PC-3 (cell line): ENCODE measurements at regions of chr12 and their contacts with region 1.

Region 1: GRCh38 chr12:115155665-115156645 is 472.0 kb upstream of the TBX3 start:
- DNase-seq: peak; percentile 99
- ATAC-seq: peak; percentile 91
- H3K4me3 ChIP-seq: no peak overlapping the region
- H3K27ac ChIP-seq: peak overlapping the region; percentile 96
- H3K4me1 ChIP-seq: peaks cover 21% of the 10 kb centered on the region
- H3K27me3 ChIP-seq: no peaks in the 10 kb centered on the region
- CTCF ChIP-seq: no peak

Region 2: DNA sequence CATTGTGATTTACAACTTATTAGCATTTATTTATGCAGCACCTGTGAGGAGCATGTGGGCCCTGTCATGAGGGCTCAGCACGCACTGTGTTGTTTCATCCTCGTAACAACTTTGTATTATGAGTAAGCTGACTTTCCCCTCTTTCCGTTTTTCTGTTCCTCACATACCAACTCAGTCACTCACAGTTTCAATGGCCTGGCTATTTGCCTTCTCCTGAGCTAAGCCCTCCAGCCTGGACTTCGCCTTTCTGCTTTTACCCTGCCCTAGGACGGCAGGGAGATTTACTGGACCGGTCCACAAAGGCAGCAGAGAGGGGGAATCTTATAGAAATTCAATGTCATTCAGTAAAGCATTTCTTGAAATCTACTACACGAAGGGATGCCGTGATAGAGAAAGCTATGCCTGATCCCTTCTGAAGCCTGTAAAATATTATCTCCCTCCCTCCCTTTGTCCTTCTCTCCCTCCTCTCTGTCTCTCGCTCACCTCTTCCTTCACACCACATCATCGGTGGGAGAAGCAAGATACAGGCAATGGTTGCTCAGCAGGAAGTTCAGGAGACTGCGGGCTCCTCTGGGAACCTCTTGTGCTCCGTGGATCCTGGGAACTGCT is 252.8 kb before region 1 on chr12:
- CTCF ChIA-PET with region 1: no interaction called
- POLR2A ChIA-PET with region 1: interaction called, 14 read pairs
- intact Hi-C with region 1: no loop called
- DNase-seq: peak; percentile 96
- ATAC-seq: peak; percentile 87
- H3K4me3 ChIP-seq: peak overlapping the region; percentile 61
- H3K27ac ChIP-seq: peak overlapping the region; percentile 94
- H3K4me1 ChIP-seq: peaks cover 47% of the 10 kb centered on the region
- H3K27me3 ChIP-seq: no peaks in the 10 kb centered on the region
- CTCF ChIP-seq: no peak

Region 3: GRCh38 chr12:114933428-114934168 is 222.4 kb before region 1 on chr12:
- CTCF ChIA-PET with region 1: no interaction called
- POLR2A ChIA-PET with region 1: interaction called, 15 read pairs
- intact Hi-C with region 1: no loop called
- DNase-seq: peak; percentile 98
- ATAC-seq: peak; percentile 96
- H3K4me3 ChIP-seq: peak overlapping the region; percentile 14; the same call in 1 of the 2 replicates
- H3K27ac ChIP-seq: peak overlapping the region; percentile 91
- H3K4me1 ChIP-seq: peaks cover 28% of the 10 kb centered on the region
- H3K27me3 ChIP-seq: no peaks in the 10 kb centered on the region
- CTCF ChIP-seq: no peak

Region 4: DNA sequence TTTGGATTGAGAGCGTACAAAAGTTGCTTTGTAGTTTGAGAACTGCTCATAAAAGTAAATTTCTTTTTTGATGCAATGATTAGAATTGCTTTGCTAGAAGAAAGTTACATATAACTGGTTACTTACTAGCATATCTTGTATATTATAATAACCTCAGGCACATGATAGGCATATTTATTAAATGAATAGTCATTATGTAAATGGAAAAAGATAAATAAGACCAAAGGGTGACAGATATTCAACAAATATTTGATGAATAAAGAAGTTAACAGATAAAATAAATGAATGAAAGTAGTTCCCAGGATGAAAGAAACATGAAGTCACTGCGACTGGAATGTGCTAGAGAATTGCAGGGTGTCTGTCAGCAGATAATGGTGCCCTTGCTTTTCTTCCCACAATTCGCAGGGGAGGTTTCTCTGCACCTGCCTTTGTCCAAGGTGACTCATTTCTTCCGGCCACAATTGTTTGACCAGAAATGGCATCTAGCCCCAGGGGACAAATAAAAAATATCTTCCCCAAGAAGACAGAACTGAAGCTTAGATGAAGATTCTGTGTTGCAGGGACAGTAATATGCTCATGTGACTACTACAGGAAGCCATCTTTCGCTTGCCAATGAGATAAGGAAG is 156.0 kb before region 1 on chr12:
- CTCF ChIA-PET with region 1: no interaction called
- POLR2A ChIA-PET with region 1: no interaction called
- intact Hi-C with region 1: loop called (anchors 1 kb)
- DNase-seq: peak; percentile 100
- ATAC-seq: peak; percentile 74
- H3K4me3 ChIP-seq: no peak overlapping the region
- H3K27ac ChIP-seq: peak overlapping the region; percentile 92
- H3K4me1 ChIP-seq: peaks cover 39% of the 10 kb centered on the region
- H3K27me3 ChIP-seq: no peaks in the 10 kb centered on the region
- CTCF ChIP-seq: no peak

Region 5: GRCh38 chr12:115060477-115061168 is 95.3 kb before region 1 on chr12:
- CTCF ChIA-PET with region 1: no interaction called
- POLR2A ChIA-PET with region 1: no interaction called
- intact Hi-C with region 1: loop called (anchors 1 kb)
- DNase-seq: peak; percentile 89
- ATAC-seq: peak; percentile 94
- H3K4me3 ChIP-seq: no peak overlapping the region
- H3K27ac ChIP-seq: peak overlapping the region; percentile 67
- H3K4me1 ChIP-seq: peaks cover 17% of the 10 kb centered on the region
- H3K27me3 ChIP-seq: no peaks in the 10 kb centered on the region
- CTCF ChIP-seq: no peak

Region 6: DNA sequence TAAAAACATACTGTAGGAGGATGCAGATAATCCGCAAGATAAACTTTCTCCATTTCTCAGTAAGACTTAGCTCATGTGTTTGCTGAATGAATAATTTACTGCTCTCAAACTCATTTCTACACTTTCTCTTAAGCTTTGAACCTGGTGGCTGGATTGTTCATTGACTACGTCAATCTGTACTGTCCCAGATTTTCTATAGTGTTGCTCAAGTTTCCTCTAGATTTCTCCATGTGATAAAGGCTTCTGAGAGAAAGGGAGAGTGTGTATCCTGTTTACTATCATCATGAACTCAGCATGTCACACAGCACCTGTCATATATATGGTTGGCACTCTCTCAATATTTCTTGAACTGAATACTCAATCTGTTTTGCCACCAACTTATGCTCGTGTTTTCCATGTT is 46.0 kb after region 1 on chr12:
- CTCF ChIA-PET with region 1: no interaction called
- POLR2A ChIA-PET with region 1: interaction called, 14 read pairs
- intact Hi-C with region 1: no loop called
- DNase-seq: peak; percentile 92
- ATAC-seq: peak; percentile 68
- H3K4me3 ChIP-seq: no peak overlapping the region
- H3K27ac ChIP-seq: peak overlapping the region; percentile 76
- H3K4me1 ChIP-seq: peaks cover 47% of the 10 kb centered on the region
- H3K27me3 ChIP-seq: no peaks in the 10 kb centered on the region
- CTCF ChIP-seq: no peak

Region 7: GRCh38 chr12:115267464-115267863 is 111.5 kb after region 1 on chr12:
- CTCF ChIA-PET with region 1: no interaction called
- POLR2A ChIA-PET with region 1: interaction called, 23 read pairs
- intact Hi-C with region 1: no loop called
- DNase-seq: no peak
- ATAC-seq: no peak
- H3K4me3 ChIP-seq: no peak overlapping the region
- H3K27ac ChIP-seq: no peak overlapping the region
- H3K4me1 ChIP-seq: no peaks in the 10 kb centered on the region
- H3K27me3 ChIP-seq: no peaks in the 10 kb centered on the region
- CTCF ChIP-seq: no peak